A549 (cell line): ENCODE measurements at regions of chr20 and their contacts with region 1.

Region 1: GRCh38 chr20:36808317-36809257 is 35.0 kb upstream of the DSN1 start:
- DNase-seq: peak; percentile 68 to 83
- ATAC-seq: peak; percentile 82 to 89
- H3K4me3 ChIP-seq: no peak overlapping the region
- H3K27ac ChIP-seq: peak overlapping the region; percentile 47 to 52
- H3K4me1 ChIP-seq: peaks cover 12% of the 10 kb centered on the region
- CTCF ChIP-seq: peak; percentile 87
- EP300 ChIP-seq: no peak
- POLR2A ChIP-seq: no peak
- RAD21 ChIP-seq: peak; percentile 23 to 43; a peak in 3 of 5 replicates

Region 2: DNA sequence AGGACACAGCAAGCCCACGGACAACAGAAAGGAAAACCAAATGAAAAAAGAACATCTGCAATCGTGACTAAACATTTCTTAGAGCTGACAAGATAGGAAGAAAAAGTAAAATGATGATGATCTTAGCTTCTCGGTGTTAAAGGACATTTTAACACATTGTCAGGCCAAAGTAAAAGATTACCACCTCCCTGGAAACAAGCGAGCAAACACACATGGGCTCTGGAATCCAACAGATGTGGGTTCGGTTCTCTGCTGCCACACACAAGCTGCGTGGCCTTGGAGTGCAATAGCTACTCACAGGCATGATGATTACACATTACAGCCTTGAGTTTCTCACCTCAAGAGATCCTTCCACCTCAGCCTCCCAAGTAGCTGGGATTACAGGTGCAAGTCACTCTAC is 579.8 kb before region 1 on chr20:
- CTCF ChIA-PET with region 1: no interaction called
- POLR2A ChIA-PET with region 1: no interaction called
- DNase-seq: no peak
- ATAC-seq: no peak
- H3K4me3 ChIP-seq: no peak overlapping the region
- H3K27ac ChIP-seq: no peak overlapping the region
- H3K4me1 ChIP-seq: no peaks in the 10 kb centered on the region
- CTCF ChIP-seq: no peak
- EP300 ChIP-seq: no peak
- POLR2A ChIP-seq: no peak
- RAD21 ChIP-seq: no peak

Region 3: DNA sequence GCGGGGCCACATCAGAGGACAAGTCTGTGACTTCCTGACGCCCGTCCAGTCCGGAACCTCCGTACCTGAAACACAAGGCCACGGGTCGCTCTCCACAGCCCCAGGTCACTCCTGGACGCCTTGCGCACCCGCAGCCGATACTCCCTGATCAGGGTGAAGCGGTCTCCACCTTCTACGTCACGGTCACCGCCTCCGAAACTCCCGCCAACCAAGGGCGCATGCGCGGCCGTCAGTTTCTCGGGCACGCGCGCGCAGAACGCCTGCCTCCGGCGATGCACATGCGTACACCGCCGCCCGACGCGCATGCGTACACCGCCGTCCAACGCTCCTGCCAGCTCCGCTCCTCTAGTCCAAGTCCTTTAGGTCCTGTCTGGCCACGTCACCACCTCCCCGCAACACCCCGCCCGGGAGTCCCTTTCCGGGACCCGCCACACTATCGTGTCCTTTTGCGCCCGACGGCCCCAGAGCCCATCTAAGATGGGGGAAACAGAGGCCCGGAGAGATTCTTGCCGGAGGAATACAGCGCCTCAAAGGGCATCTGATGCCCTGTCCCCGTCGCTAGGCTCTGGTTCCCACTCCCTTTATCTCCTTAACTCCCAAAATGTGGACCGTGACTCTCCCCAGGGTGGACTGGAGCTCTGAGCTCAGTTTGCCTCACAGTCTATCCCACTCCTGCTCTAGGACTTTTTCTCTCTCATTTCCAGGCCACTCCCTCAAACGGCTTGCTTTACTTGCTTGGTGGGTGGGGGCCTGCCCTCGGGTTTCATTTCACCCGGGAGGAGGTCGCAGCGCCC is 34.8 kb before region 1 on chr20 and contains the start of gene DSN1:
- CTCF ChIA-PET with region 1: interaction called, 19 read pairs
- POLR2A ChIA-PET with region 1: no interaction called
- DNase-seq: peak; percentile 96 to 98
- ATAC-seq: peak; percentile 89 to 91
- H3K4me3 ChIP-seq: peak within 1 kb of the TSS; percentile 63
- H3K27ac ChIP-seq: peak within 1 kb of the TSS; percentile 93 to 98
- H3K4me1 ChIP-seq: peaks cover 8% of the 10 kb centered on the region
- CTCF ChIP-seq: no peak; the same call in 2 of the 3 replicates
- EP300 ChIP-seq: no peak
- POLR2A ChIP-seq: peak; percentile 61
- RAD21 ChIP-seq: peak; percentile 43 to 49; a peak in 3 of 5 replicates
- polyA plus RNA-seq, gene DSN1: 32.9 and 41.3 TPM in 2 replicates

Region 4: GRCh38 chr20:36821964-36822437 is 13.4 kb after region 1 on chr20:
- CTCF ChIA-PET with region 1: interaction called, 48 read pairs
- POLR2A ChIA-PET with region 1: no interaction called
- DNase-seq: no peak
- ATAC-seq: peak; percentile 19 to 40; a peak in 2 of 6 replicates
- H3K4me3 ChIP-seq: no peak overlapping the region
- H3K27ac ChIP-seq: 0 out of 6 replicates have a peak overlapping the region, but pooled peaks of 1 of the 2 experiments have one; percentile 15
- H3K4me1 ChIP-seq: no peaks in the 10 kb centered on the region
- CTCF ChIP-seq: no peak
- EP300 ChIP-seq: no peak
- POLR2A ChIP-seq: no peak
- RAD21 ChIP-seq: no peak

Region 5: DNA sequence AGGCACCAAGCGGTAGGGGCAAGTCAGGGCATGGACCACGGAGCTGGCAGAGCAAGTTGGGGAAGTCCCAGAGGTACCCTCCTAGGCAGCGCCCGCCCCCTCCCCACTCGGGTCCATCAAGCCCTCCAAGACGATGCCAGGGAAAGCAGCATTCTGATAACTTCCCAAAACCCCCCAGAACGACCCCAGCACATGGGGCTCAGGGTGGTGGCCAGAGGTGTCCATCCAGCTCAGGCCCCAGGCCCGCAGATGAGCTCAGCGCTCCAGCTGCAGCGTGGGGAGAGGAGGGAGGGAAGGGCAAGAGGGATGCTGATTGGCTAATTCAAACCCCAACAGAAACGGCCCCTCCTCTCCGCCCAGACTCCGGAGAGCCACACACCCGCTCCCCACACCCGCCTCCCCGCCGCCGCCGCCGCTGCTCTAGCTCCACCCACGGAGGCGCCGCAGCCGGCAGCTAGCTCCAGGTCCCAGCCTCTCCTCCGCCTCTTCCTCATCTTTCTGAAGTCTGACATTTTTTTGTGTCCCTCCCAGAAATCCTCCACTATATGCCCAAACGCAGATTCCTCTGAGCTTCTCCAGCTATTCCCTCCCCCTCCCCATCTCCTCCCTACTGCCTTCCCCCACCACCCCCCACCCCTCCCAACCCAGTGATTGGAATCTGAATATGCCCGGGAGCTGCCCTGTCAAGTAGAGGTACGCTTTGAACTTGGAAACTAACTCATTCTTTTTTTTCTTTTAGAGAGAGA is 27.0 kb after region 1 on chr20:
- CTCF ChIA-PET with region 1: interaction called, 32 read pairs
- POLR2A ChIA-PET with region 1: no interaction called
- DNase-seq: peak; percentile 92 to 98
- ATAC-seq: peak; percentile 97 to 98
- H3K4me3 ChIP-seq: peak overlapping the region; percentile 33
- H3K27ac ChIP-seq: peak overlapping the region; percentile 87 to 92
- H3K4me1 ChIP-seq: peaks cover 34% of the 10 kb centered on the region
- CTCF ChIP-seq: no peak
- EP300 ChIP-seq: no peak
- POLR2A ChIP-seq: 0 out of 2 replicates have a peak, but pooled peaks have one; percentile 15
- RAD21 ChIP-seq: no peak

Region 6: GRCh38 chr20:36856691-36857635 is 48.4 kb after region 1 on chr20:
- CTCF ChIA-PET with region 1: interaction called, 18 read pairs
- POLR2A ChIA-PET with region 1: no interaction called
- DNase-seq: no peak
- ATAC-seq: no peak
- H3K4me3 ChIP-seq: no peak overlapping the region
- H3K27ac ChIP-seq: peak overlapping the region in 1 of 2 experiments; percentile 82; a peak in 3 of 6 replicates
- H3K4me1 ChIP-seq: peaks cover 61% of the 10 kb centered on the region
- CTCF ChIP-seq: no peak
- EP300 ChIP-seq: no peak
- POLR2A ChIP-seq: no peak
- RAD21 ChIP-seq: no peak